ENCODE measurements at regions of chr11 and their contacts with region 1.

Region 1: DNA sequence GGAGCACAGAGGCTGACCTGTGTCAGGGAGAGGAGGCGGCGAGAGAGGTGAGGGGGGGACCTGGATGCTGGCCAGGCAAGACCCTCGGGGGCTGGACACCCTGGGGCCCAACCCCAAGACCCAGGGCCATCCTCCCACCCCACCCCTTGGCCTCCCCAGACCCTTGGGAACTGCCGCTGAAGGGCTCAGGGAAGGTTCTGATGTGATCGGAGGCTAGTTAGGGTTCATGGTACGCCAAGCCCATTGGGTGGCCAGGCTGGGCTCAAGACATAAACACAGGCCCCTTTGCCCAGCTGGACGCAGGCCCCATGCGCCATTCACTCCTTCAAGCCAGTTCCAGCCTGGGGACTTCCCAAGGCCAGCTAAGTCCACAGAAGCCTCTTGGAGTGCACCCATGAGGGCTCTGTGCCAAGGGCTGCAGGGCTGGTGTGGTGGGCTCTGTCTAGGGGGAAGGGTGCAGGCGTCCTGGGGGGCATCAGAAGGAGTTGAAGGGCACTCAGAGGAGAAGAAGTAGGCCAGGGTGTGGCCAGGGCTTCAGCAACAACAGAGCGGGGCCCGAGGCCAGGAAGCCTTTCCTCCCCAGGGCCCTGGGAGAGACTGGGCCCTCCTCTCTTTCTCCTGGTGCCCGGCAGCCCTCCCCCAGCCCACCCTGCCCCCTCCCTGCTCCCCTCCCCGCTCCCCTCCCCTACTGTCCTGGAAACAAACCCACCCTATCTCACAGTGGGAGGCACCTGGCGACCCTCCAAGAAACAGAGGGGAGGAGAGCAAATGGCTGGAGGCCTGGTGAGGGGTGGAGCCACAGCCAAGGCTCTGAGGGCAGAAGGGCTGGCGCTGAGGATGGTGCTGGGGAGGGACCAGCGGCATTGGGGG is 12.9 kb downstream of the TSPAN32 start:
- DNase-seq: no peak
- ATAC-seq: no peak
- H3K4me3 ChIP-seq: no peak overlapping the region
- H3K27ac ChIP-seq: no peak overlapping the region
- H3K4me1 ChIP-seq: no peaks in the 10 kb centered on the region
- H3K27me3 ChIP-seq: peaks cover 14 to 37% of the 10 kb centered on the region in 2 experiments; a peak in 3 of 5 replicates
- CTCF ChIP-seq: no peak
- EP300 ChIP-seq: no peak
- POLR2A ChIP-seq: no peak
- RAD21 ChIP-seq: no peak

Region 2: GRCh38 chr11:2526808-2527381 is 212.1 kb after region 1 on chr11:
- CTCF ChIA-PET with region 1: no interaction called
- POLR2A ChIA-PET with region 1: no interaction called
- in situ Hi-C with region 1: loop called (anchors 5 kb)
- intact Hi-C with region 1: loop called (anchors 10 kb)
- DNase-seq: no peak
- ATAC-seq: peak; percentile 52
- H3K4me3 ChIP-seq: peak overlapping the region in 2 of 3 experiments; percentile 29 to 48; a peak in 3 of 6 replicates
- H3K27ac ChIP-seq: no peak overlapping the region
- H3K4me1 ChIP-seq: peaks cover 10% of the 10 kb centered on the region; the same call in 1 of the 2 replicates
- H3K27me3 ChIP-seq: peaks cover 20 to 81% of the 10 kb centered on the region in 2 experiments
- CTCF ChIP-seq: peak; percentile 35; the same call in 1 of the 2 replicates
- EP300 ChIP-seq: no peak
- POLR2A ChIP-seq: no peak
- RAD21 ChIP-seq: no peak

Region 3: DNA sequence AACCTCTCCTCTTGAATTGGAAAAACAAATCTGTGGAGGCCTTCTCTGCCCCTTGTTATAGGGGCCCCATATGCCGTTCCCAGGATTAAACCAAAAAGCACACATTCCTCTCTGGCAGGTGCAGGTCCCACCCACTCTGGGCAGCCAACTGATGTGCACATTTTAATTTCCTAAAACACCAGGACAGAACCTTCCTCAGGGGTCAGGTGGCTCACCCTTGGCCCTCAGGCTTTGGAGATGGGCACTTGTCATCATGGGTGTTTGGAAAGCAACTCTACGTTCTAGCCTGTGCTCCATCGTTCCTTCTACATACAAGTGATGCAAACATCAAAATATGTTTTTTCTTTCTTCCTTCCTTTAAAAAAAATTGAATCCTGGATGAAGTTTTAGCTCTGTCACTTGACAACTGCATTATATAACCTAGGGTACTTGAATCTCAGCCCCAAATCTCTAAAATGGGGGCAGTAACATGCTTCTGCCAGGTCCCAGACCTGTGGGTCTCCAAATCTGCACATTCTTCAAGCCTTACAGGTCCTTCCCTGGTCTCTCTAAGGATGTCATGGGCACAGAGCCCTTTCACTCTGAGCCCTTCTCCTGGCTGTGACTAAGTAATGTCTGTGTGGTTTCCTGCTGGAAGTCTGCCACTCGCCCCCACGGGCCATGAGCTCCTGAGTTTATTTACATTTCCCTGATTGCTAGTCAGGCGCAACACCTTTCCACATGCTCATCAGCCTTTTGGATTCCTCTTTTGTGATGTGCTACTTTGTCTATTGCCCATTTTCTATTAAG is 341.3 kb after region 1 on chr11:
- CTCF ChIA-PET with region 1: no interaction called
- POLR2A ChIA-PET with region 1: no interaction called
- in situ Hi-C with region 1: no loop called
- intact Hi-C with region 1: no loop called
- DNase-seq: no peak
- ATAC-seq: peak; percentile 10
- H3K4me3 ChIP-seq: no peak overlapping the region
- H3K27ac ChIP-seq: no peak overlapping the region
- H3K4me1 ChIP-seq: 0 out of 2 replicates have a peak, but pooled peaks cover 8% of the 10 kb centered on the region
- H3K27me3 ChIP-seq: no peaks in the 10 kb centered on the region
- CTCF ChIP-seq: no peak
- EP300 ChIP-seq: no peak
- POLR2A ChIP-seq: peak; percentile 40 to 47; a peak in 1 of 4 replicates
- RAD21 ChIP-seq: no peak

Measured in HepG2 (cell line).